ENCODE measurements at regions of chr9 and their contacts with region 1.

Region 1: DNA sequence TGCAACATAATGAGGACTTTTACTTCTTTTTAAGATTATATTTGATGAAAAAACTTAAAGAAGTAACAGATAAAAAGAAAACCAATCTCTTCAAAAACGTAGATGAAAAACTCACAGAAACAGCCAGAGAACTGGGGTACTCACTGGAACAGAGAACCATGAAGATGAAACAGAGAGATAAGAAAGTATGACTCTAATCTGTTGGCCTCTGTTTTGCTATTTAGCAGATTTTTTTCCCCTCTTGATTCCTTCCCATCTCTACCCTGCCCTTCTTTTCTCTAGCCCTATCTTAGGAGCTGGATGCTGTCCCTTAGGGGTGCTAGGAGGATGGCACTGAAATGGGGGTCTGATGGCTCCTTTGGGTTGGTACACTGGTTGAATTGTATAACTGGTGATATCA is 97.5 kb upstream of the FREM1 start:
- DNase-seq: no peak
- H3K4me3 ChIP-seq: no peak overlapping the region
- H3K27ac ChIP-seq: no peak overlapping the region
- H3K4me1 ChIP-seq: no peaks in the 10 kb centered on the region
- H3K27me3 ChIP-seq: no peaks in the 10 kb centered on the region
- CTCF ChIP-seq: no peak
- EP300 ChIP-seq: no peak
- POLR2A ChIP-seq: no peak

Region 2: GRCh38 chr9:14780251-14780650 is 227.4 kb before region 1 on chr9:
- in situ Hi-C with region 1: no loop called
- intact Hi-C with region 1: no loop called
- DNase-seq: no peak
- H3K4me3 ChIP-seq: no peak overlapping the region
- H3K27ac ChIP-seq: no peak overlapping the region
- H3K4me1 ChIP-seq: no peaks in the 10 kb centered on the region
- H3K27me3 ChIP-seq: no peaks in the 10 kb centered on the region
- CTCF ChIP-seq: no peak
- EP300 ChIP-seq: no peak
- POLR2A ChIP-seq: no peak

Region 3: GRCh38 chr9:14909961-14910805 is 97.5 kb before region 1 on chr9 and contains the start of gene FREM1:
- in situ Hi-C with region 1: no loop called
- intact Hi-C with region 1: no loop called
- DNase-seq: peak; percentile 32
- H3K4me3 ChIP-seq: peak within 1 kb of the TSS; percentile 10 to 38 (median 18)
- H3K27ac ChIP-seq: peak within 1 kb of the TSS; percentile 53 to 74 (median 67)
- H3K4me1 ChIP-seq: peaks cover 0 to 47% (median 14%) of the 10 kb centered on the region in 4 donors
- H3K27me3 ChIP-seq: no peaks in the 10 kb centered on the region
- CTCF ChIP-seq: no peak
- EP300 ChIP-seq: no peak
- POLR2A ChIP-seq: no peak
- total RNA-seq, gene FREM1: 2.2 to 12.7 (median 5.7) TPM

Region 4: DNA sequence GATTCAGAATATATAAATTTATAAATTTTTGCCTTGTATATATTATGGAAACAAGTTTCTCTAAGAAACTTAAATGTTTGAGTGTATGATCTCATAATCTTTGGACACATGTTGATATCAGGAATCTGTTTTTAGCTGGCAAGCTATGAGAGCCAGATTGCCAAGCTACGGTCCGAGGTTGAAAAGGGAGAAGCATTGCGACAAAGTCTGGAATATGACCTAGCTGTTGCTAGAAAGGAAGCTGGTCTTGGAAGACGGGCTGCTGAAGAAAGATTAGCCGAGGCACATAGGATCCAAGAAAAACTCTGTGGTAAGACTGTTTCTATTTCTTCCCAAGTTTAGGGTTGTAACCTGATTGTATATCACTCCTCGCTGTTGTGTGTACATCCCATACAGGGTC is 571.0 kb after region 1 on chr9:
- in situ Hi-C with region 1: no loop called
- intact Hi-C with region 1: loop called (anchors 5 kb)
- DNase-seq: no peak
- H3K4me3 ChIP-seq: no peak overlapping the region
- H3K27ac ChIP-seq: no peak overlapping the region
- H3K4me1 ChIP-seq: no peaks in the 10 kb centered on the region
- H3K27me3 ChIP-seq: no peaks in the 10 kb centered on the region
- CTCF ChIP-seq: no peak
- EP300 ChIP-seq: no peak
- POLR2A ChIP-seq: no peak

Measured in transverse colon (tissue), 4 donors.